HepG2 (cell line): ENCODE measurements at regions of chr22 and their contacts with region 1.

Region 1: DNA sequence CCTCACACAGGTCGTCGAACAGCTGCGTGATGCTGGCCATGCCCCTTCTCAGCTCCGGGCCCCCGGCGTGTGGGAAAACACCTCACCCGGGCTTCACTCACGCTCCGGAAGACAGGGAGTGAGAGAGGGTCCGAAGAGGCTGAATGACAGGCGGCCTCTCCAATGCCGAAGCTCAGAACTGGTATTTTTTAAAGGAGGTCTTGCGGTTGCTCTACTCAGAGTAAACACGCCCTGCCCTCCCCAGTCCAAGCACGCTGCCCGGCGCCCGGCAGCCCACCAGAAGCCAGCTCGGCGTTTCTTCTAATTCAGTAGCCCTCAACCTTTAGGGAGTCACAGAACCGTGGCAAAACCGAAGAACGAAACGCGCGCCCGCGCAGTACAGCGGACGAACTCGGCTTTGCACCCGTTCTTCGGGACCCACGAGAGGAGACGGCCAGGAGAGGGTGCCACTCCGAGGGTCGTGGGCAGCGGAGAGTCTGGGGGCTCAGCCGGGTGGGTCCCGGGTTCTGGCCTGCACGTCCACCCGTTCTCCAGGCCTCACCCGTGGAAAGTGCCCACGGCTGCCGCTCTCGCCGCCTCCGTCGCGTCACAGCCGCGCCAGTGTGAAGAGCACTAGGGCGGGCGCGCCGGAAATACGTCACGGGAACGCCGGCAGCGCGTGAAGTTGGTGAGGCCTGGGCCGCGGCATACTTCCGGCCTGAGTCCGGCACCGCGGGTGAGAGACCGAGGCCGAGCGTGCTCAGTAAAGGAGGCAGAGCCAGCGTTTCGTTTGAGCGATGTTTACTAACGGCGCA is at the start of gene TUBGCP6:
- DNase-seq: peak; percentile 84
- ATAC-seq: peak; percentile 81
- H3K4me3 ChIP-seq: peak within 1 kb of the TSS; percentile 77 to 98 (median 89)
- H3K27ac ChIP-seq: peak within 1 kb of the TSS; percentile 77
- H3K4me1 ChIP-seq: peaks cover 33% of the 10 kb centered on the region
- H3K27me3 ChIP-seq: no peaks in the 10 kb centered on the region; a peak in 1 of 5 replicates
- CTCF ChIP-seq: peak; percentile 43; the same call in 1 of the 2 replicates
- EP300 ChIP-seq: no peak
- POLR2A ChIP-seq: peak; percentile 71 to 87
- RAD21 ChIP-seq: peak; percentile 39; the same call in 1 of the 2 replicates
- total RNA-seq, gene TUBGCP6: 5.8 and 15.7 TPM in 2 replicates

Region 2: DNA sequence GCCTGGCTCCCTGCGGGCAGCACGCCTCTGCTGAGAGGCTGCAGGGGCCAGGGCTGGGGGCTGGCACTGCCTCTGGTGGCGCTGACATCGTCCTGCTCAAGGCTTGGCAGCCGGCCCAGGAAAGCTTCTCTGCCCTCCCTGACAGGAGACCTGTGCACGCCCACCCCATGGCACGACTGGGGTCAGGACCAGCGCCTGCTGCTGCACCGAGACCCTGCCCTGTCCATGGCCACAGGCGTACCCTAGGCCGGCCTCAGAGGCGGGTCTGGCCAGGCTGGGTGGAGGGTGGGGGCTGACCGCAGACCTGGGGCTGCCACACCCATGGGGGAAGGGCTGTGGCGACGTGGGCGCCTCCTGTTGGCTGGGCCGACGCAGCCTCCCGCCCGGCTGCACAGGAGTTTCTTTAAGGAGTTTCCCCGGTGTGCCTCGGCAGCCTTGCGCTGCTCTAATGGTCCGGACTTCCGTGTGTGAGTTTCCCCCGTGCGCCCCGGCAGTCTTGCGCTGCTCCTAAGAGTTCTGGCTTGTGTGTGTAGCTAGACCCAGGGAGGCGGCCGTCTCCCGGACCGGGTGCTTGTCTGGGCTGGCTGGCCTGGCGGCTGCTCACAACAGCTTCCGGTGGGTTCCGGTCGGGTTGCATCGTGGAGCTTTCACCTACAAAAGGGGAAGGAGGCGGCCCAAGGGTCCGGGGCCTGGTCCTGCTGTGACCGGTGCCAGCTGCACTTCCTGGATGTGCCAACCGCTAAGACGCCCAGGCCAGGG is 54.3 kb before region 1 on chr22:
- CTCF ChIA-PET with region 1: no interaction called
- POLR2A ChIA-PET with region 1: no interaction called
- in situ Hi-C with region 1: no loop called
- intact Hi-C with region 1: no loop called
- DNase-seq: no peak
- ATAC-seq: no peak
- H3K4me3 ChIP-seq: no peak overlapping the region
- H3K27ac ChIP-seq: no peak overlapping the region
- H3K4me1 ChIP-seq: peaks cover 11% of the 10 kb centered on the region
- H3K27me3 ChIP-seq: no peaks in the 10 kb centered on the region
- CTCF ChIP-seq: peak; percentile 22; the same call in 1 of the 2 replicates
- EP300 ChIP-seq: no peak
- POLR2A ChIP-seq: no peak
- RAD21 ChIP-seq: no peak

Region 3: GRCh38 chr22:50282361-50282760 is 37.7 kb after region 1 on chr22:
- CTCF ChIA-PET with region 1: no interaction called
- POLR2A ChIA-PET with region 1: no interaction called
- in situ Hi-C with region 1: no loop called
- intact Hi-C with region 1: no loop called
- DNase-seq: no peak
- ATAC-seq: no peak
- H3K4me3 ChIP-seq: no peak overlapping the region
- H3K27ac ChIP-seq: no peak overlapping the region
- H3K4me1 ChIP-seq: no peaks in the 10 kb centered on the region
- H3K27me3 ChIP-seq: no peaks in the 10 kb centered on the region
- CTCF ChIP-seq: no peak
- EP300 ChIP-seq: no peak
- POLR2A ChIP-seq: no peak
- RAD21 ChIP-seq: no peak

Region 4: GRCh38 chr22:50304528-50305392 is 60.1 kb after region 1 on chr22:
- CTCF ChIA-PET with region 1: no interaction called
- POLR2A ChIA-PET with region 1: no interaction called
- in situ Hi-C with region 1: no loop called
- intact Hi-C with region 1: no loop called
- DNase-seq: no peak
- ATAC-seq: no peak
- H3K4me3 ChIP-seq: peak overlapping the region in 2 of 3 experiments; percentile 95
- H3K27ac ChIP-seq: peak overlapping the region; percentile 67
- H3K4me1 ChIP-seq: peaks cover 75% of the 10 kb centered on the region
- H3K27me3 ChIP-seq: no peaks in the 10 kb centered on the region
- CTCF ChIP-seq: no peak
- EP300 ChIP-seq: no peak
- POLR2A ChIP-seq: no peak
- RAD21 ChIP-seq: no peak

Region 5: GRCh38 chr22:50315289-50316115 is 70.9 kb after region 1 on chr22:
- CTCF ChIA-PET with region 1: no interaction called
- POLR2A ChIA-PET with region 1: no interaction called
- in situ Hi-C with region 1: no loop called
- intact Hi-C with region 1: no loop called
- DNase-seq: no peak
- ATAC-seq: no peak
- H3K4me3 ChIP-seq: no peak overlapping the region
- H3K27ac ChIP-seq: no peak overlapping the region
- H3K4me1 ChIP-seq: peaks cover 68% of the 10 kb centered on the region
- H3K27me3 ChIP-seq: peaks cover 0 to 1% of the 10 kb centered on the region in 2 experiments; a peak in 3 of 5 replicates
- CTCF ChIP-seq: no peak
- EP300 ChIP-seq: no peak
- POLR2A ChIP-seq: no peak
- RAD21 ChIP-seq: no peak

Region 6: DNA sequence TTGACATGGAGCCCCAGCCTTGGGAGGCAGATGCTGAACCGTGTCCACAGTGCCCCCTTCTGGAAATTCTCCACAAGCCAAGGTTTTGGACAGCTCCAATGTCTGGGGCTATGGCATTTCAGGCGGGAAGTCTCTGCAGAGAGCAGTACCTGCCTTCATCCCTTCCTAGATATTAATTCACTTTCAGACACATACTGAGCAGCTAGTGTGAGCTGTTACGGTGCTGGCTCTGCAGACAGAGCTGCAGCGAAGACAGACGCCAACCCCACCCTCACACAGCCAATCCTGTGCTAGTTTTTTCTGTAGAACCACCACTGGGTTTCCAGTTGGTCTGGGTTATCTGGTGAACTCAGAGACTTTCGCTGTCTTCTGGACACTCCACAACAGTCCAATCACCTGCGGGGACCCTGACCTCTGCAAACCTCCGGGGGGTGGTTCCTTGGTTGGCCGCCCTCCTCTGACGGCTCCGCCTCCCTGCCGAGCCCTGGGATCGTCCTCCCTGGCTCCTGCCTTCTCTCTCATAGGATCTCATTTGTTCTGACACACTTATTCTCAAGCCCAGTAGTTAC is 253.8 kb after region 1 on chr22:
- CTCF ChIA-PET with region 1: no interaction called
- POLR2A ChIA-PET with region 1: interaction called, 3 read pairs
- in situ Hi-C with region 1: no loop called
- intact Hi-C with region 1: loop called (anchors 5 kb)
- DNase-seq: peak; percentile 80
- ATAC-seq: peak; percentile 93
- H3K4me3 ChIP-seq: peak overlapping the region in 1 of 3 experiments; percentile 33; a peak in 2 of 6 replicates
- H3K27ac ChIP-seq: peak overlapping the region; percentile 61
- H3K4me1 ChIP-seq: peaks cover 32% of the 10 kb centered on the region
- H3K27me3 ChIP-seq: no peaks in the 10 kb centered on the region
- CTCF ChIP-seq: peak; percentile 90
- EP300 ChIP-seq: no peak
- POLR2A ChIP-seq: no peak
- RAD21 ChIP-seq: peak; percentile 55